ENCODE measurements at regions of chr15 and their contacts with region 1.

Region 1: DNA sequence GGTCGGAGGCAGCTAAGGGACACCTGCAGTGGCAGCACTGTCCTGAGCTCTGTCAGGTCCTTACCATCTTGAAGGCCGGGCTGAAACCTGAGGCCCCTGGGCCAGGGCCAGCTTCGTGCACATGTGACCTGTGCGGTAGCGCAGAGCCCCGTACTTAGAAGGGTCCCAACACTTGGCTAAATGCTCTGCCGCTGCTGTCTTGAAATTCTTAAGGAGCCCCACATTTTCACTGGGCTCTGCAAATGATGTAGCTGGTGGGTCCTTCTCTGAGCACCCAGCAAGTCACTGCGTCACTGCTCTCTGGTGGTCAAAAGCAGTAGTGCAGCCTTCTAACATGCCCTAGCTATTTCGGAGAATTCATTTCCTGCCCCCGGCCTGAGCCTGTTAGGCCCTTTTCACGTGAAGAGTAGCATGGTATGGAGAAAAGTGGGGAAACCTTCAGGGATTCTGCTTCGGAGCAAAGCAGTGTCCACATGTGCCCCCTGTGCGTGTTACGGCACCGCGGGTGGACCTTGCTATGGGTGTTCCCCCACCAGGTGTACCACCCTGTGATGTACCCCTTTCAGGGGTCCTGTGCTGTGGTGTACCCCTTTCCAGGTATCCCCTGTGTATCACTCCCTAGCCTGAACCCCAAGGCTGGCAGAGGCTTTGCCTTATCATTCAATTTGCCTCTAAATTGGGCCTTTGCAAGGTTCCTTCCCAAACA is 79.7 kb downstream of the TMEM266 start:
- DNase-seq: peak; percentile 66
- ATAC-seq: peak; percentile 99
- H3K4me3 ChIP-seq: no peak overlapping the region
- H3K27ac ChIP-seq: no peak overlapping the region
- H3K4me1 ChIP-seq: no peaks in the 10 kb centered on the region
- H3K27me3 ChIP-seq: peaks cover 49% of the 10 kb centered on the region
- CTCF ChIP-seq: peak; percentile 87
- POLR2A ChIP-seq: no peak
- RAD21 ChIP-seq: peak; percentile 79

Region 2: DNA sequence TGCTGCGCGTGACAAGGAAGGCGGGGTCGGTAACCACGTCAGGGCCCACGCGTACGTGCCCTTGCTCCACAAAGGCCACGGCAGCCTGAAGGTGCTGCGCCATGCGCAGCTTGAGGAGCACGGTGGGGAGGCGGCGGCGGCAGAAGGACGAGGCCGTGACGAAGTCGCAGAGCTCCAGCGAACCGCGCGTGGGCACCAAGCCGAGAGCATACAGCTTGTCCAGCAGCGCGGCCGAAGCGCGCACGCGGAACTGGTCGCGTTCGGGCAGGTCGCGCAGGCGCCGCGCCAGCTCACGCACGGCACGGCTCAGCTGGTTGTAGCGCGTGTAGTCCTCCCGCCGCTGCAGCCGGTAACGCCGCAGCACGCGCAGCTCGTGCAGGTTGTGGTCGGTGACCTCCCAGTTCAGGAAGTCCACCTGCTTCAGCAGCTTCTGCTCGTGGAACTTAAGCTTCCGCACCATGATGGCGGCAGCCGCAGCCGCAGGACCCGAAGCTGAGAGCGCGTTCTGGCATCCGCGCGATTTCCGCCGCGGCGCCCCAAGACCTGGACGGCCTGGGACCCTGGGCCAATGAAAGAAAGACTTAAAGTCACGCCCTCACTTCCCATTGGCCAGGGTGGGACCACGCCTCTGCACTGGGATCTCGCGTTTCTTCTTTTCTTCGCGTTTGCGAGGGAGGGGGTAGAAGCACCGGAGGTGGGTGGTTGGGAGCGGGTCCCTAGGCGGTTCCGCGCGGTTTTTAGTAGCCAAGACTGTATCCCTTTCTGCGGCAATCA is 499.6 kb before region 1 on chr15 and contains the start of gene IMP3:
- CTCF ChIA-PET with region 1: no interaction called
- POLR2A ChIA-PET with region 1: no interaction called
- dilution Hi-C with region 1: no loop called
- in situ Hi-C with region 1: no loop called
- intact Hi-C with region 1: no loop called
- DNase-seq: peak; percentile 95
- ATAC-seq: peak; percentile 96
- H3K4me3 ChIP-seq: peak within 1 kb of the TSS; percentile 77
- H3K27ac ChIP-seq: peak within 1 kb of the TSS; percentile 92
- H3K4me1 ChIP-seq: peaks cover 4% of the 10 kb centered on the region; the same call in 1 of the 2 replicates
- H3K27me3 ChIP-seq: no peaks in the 10 kb centered on the region
- CTCF ChIP-seq: no peak
- POLR2A ChIP-seq: peak; percentile 94
- RAD21 ChIP-seq: no peak
- total RNA-seq, gene IMP3: 42.1 and 84.7 TPM in 2 replicates

Region 3: GRCh38 chr15:75809986-75810750 is 329.4 kb before region 1 on chr15:
- CTCF ChIA-PET with region 1: interaction called, 5 read pairs
- POLR2A ChIA-PET with region 1: no interaction called
- dilution Hi-C with region 1: no loop called
- in situ Hi-C with region 1: loop called (anchors 10 kb)
- intact Hi-C with region 1: loop called (anchors 2 kb)
- DNase-seq: no peak
- ATAC-seq: peak; percentile 71; the same call in 1 of the 2 replicates
- H3K4me3 ChIP-seq: no peak overlapping the region
- H3K27ac ChIP-seq: no peak overlapping the region
- H3K4me1 ChIP-seq: no peaks in the 10 kb centered on the region
- H3K27me3 ChIP-seq: peaks cover 16% of the 10 kb centered on the region
- CTCF ChIP-seq: peak; percentile 45
- POLR2A ChIP-seq: no peak
- RAD21 ChIP-seq: peak; percentile 58

Region 4: GRCh38 chr15:75947092-75947491 is 192.4 kb before region 1 on chr15:
- CTCF ChIA-PET with region 1: no interaction called
- POLR2A ChIA-PET with region 1: no interaction called
- dilution Hi-C with region 1: no loop called
- in situ Hi-C with region 1: no loop called
- intact Hi-C with region 1: loop called (anchors 10 kb)
- DNase-seq: peak; percentile 77
- ATAC-seq: peak; percentile 70
- H3K4me3 ChIP-seq: no peak overlapping the region
- H3K27ac ChIP-seq: no peak overlapping the region
- H3K4me1 ChIP-seq: peaks cover 3% of the 10 kb centered on the region; the same call in 1 of the 2 replicates
- H3K27me3 ChIP-seq: no peaks in the 10 kb centered on the region
- CTCF ChIP-seq: no peak
- POLR2A ChIP-seq: no peak
- RAD21 ChIP-seq: no peak

Region 5: DNA sequence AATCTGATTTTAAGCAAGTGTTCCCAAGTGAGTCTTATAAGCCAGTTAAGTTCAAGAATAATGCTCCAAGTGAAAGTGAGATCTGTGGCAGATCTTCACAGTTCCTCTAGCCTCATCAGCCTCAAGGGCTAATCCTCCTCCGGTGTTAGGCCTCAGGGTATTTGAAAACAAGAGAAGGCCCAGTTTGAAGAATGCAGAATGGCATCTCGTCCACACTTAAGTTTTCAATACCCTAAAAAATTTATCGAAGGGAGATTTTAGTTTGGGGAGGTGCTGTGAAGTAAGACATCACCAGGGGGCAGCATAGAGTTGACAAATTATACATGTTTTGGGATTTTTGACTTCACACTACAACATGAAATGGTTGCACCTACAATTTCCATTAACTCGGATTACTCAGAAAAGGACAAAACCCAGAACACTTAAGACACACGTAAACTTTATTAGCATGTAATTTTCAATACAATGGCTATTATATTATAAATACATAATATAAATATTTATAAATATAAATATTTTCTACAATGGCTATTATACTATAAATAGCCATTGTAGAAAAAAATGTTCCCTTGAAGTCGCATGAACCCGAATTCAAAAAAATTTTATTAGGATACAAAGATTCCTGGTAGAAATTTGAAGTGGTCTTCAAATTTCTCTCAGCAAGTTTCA is 82.1 kb before region 1 on chr15:
- CTCF ChIA-PET with region 1: interaction called, 29 read pairs
- POLR2A ChIA-PET with region 1: no interaction called
- dilution Hi-C with region 1: no loop called
- in situ Hi-C with region 1: no loop called
- intact Hi-C with region 1: loop called (anchors 1 kb)
- DNase-seq: peak; percentile 22
- ATAC-seq: 0 out of 2 replicates have a peak, but pooled peaks have one; percentile 19
- H3K4me3 ChIP-seq: peak overlapping the region; percentile 23; the same call in 1 of the 2 replicates
- H3K27ac ChIP-seq: no peak overlapping the region
- H3K4me1 ChIP-seq: peaks cover 1% of the 10 kb centered on the region; the same call in 1 of the 2 replicates
- H3K27me3 ChIP-seq: peaks cover 47% of the 10 kb centered on the region
- CTCF ChIP-seq: peak; percentile 70
- POLR2A ChIP-seq: no peak
- RAD21 ChIP-seq: peak; percentile 49

Region 6: GRCh38 chr15:76150971-76151598 is 11.6 kb after region 1 on chr15:
- CTCF ChIA-PET with region 1: interaction called, 15 read pairs
- POLR2A ChIA-PET with region 1: no interaction called
- dilution Hi-C with region 1: no loop called
- in situ Hi-C with region 1: no loop called
- intact Hi-C with region 1: no loop called
- DNase-seq: peak; percentile 88
- ATAC-seq: peak; percentile 86
- H3K4me3 ChIP-seq: no peak overlapping the region
- H3K27ac ChIP-seq: peak overlapping the region; percentile 31; the same call in 1 of the 2 replicates
- H3K4me1 ChIP-seq: peaks cover 42% of the 10 kb centered on the region
- H3K27me3 ChIP-seq: peaks cover 6% of the 10 kb centered on the region
- CTCF ChIP-seq: peak; percentile 79
- POLR2A ChIP-seq: no peak
- RAD21 ChIP-seq: peak; percentile 63